CD4-positive, alpha-beta T cell (primary cell): ENCODE measurements at regions of chr6 and their contacts with region 1.

Region 1: GRCh38 chr6:155314092-155314772 is at the start of gene TFB1M:
- DNase-seq: peak; percentile 88 to 99 (median 96)
- ATAC-seq: peak; percentile 94
- H3K4me3 ChIP-seq: peak within 1 kb of the TSS; percentile 74
- H3K4me3 Mint-ChIP-seq: peak within 1 kb of the TSS; percentile 97
- H3K27ac ChIP-seq: peak within 1 kb of the TSS; percentile 84 to 92
- H3K27ac Mint-ChIP-seq: peak within 1 kb of the TSS; percentile 91
- H3K4me1 ChIP-seq: no peaks in the 10 kb centered on the region
- H3K4me1 Mint-ChIP-seq: peaks cover 48% of the 10 kb centered on the region
- H3K27me3 ChIP-seq: no peaks in the 10 kb centered on the region
- H3K27me3 Mint-ChIP-seq: no peaks in the 10 kb centered on the region
- CTCF ChIP-seq: no peak
- total RNA-seq, gene TFB1M: 7.2 to 9.2 TPM

Region 2: DNA sequence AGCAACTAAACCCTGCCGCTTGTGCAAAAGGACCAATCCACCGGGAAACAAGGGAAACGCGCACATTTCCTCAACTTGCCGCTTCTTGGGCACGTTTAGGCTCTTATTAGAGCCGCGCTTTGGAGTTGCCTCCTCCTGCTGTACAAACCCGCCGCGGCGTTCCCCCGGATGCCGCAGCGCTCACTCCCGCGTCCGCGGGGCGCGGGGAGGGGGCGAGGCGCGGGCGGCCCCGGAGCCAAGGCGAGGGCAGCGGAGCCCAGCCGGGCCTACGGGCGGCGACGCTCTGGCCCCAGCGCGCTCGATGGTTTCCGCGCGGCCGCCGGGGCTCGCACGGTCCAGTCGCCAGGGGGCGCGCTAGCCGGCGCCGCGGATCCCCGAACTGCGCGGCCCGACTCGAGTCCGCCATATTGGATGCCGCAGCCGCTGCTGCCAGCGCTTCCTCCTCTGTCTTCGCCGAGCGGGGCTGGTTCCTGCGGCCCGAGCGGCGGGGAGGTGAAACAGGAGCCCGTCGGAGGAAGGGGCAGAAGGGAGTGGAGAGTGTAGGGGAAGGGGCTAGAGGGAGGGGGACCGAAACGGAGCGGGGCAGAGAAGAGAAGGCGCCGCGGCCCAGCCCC is 581.1 kb before region 1 on chr6 and contains the start of gene SCAF8:
- CTCF ChIA-PET with region 1: no interaction called
- POLR2A ChIA-PET with region 1: no interaction called
- intact Hi-C with region 1: loop called (anchors 2 to 5 kb)
- DNase-seq: peak; percentile 70 to 95 (median 83)
- ATAC-seq: peak; percentile 65
- H3K4me3 ChIP-seq: peak within 1 kb of the TSS; percentile 87
- H3K4me3 Mint-ChIP-seq: peak within 1 kb of the TSS; percentile 95
- H3K27ac ChIP-seq: peak within 1 kb of the TSS; percentile 95 to 98
- H3K27ac Mint-ChIP-seq: peak within 1 kb of the TSS; percentile 86
- H3K4me1 ChIP-seq: peaks cover 41% of the 10 kb centered on the region
- H3K4me1 Mint-ChIP-seq: peaks cover 36% of the 10 kb centered on the region
- H3K27me3 ChIP-seq: no peaks in the 10 kb centered on the region
- H3K27me3 Mint-ChIP-seq: no peaks in the 10 kb centered on the region
- CTCF ChIP-seq: peak; percentile 69
- total RNA-seq, gene SCAF8: 82.6 to 83.8 TPM

Region 3: GRCh38 chr6:154738551-154738961 is 575.7 kb before region 1 on chr6:
- CTCF ChIA-PET with region 1: no interaction called
- POLR2A ChIA-PET with region 1: no interaction called
- intact Hi-C with region 1: loop called (anchors 2 to 5 kb)
- DNase-seq: no peak
- ATAC-seq: no peak
- H3K4me3 ChIP-seq: no peak overlapping the region
- H3K4me3 Mint-ChIP-seq: peak overlapping the region; percentile 74
- H3K27ac ChIP-seq: no peak overlapping the region
- H3K27ac Mint-ChIP-seq: no peak overlapping the region
- H3K4me1 ChIP-seq: peaks cover 51% of the 10 kb centered on the region
- H3K4me1 Mint-ChIP-seq: peaks cover 74% of the 10 kb centered on the region
- H3K27me3 ChIP-seq: no peaks in the 10 kb centered on the region
- H3K27me3 Mint-ChIP-seq: no peaks in the 10 kb centered on the region
- CTCF ChIP-seq: no peak

Region 4: DNA sequence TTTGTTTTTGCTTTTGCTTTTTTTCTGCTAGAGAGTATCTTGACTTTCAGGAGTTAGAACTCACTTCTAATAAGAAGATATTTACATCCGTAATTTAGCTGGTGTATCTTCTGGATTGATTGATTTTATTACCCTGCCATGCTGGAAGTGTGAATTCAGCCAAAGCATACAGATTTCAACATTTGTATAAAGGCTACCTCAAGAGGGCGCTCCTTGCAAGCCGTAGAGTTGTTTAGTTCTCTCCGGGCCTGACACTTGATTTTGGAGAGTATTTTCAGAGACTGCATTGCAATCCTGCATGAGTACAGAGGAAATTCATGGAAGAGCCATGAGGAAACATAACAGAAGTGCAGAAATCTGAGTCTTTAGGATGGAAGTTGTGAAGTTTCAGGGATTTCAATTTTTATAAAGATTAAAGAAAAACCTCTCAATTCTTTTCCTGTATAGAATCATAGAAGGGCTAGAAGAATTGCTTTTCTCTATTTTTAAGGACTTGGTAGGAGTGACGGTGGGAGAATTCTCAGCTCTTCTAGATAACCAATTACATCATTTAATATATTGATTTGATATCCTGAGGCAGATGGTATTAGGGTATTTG is 385.8 kb before region 1 on chr6:
- CTCF ChIA-PET with region 1: no interaction called
- POLR2A ChIA-PET with region 1: no interaction called
- intact Hi-C with region 1: loop called in 1 of 2 experiments (anchors 2 kb)
- DNase-seq: peak; percentile 16 to 74 (median 44)
- ATAC-seq: peak; percentile 49
- H3K4me3 ChIP-seq: no peak overlapping the region
- H3K4me3 Mint-ChIP-seq: no peak overlapping the region
- H3K27ac ChIP-seq: no peak overlapping the region
- H3K27ac Mint-ChIP-seq: no peak overlapping the region
- H3K4me1 ChIP-seq: no peaks in the 10 kb centered on the region
- H3K4me1 Mint-ChIP-seq: peaks cover 8% of the 10 kb centered on the region
- H3K27me3 ChIP-seq: no peaks in the 10 kb centered on the region
- H3K27me3 Mint-ChIP-seq: no peaks in the 10 kb centered on the region
- CTCF ChIP-seq: peak; percentile 76

Region 5: GRCh38 chr6:155174576-155175211 is 139.5 kb before region 1 on chr6:
- CTCF ChIA-PET with region 1: interaction called, 4 read pairs
- POLR2A ChIA-PET with region 1: interaction called, 4 read pairs
- intact Hi-C with region 1: loop called (anchors 5 to 10 kb)
- DNase-seq: peak; percentile 25 to 85 (median 42)
- ATAC-seq: peak; percentile 58
- H3K4me3 ChIP-seq: no peak overlapping the region
- H3K4me3 Mint-ChIP-seq: no peak overlapping the region
- H3K27ac ChIP-seq: no peak overlapping the region
- H3K27ac Mint-ChIP-seq: no peak overlapping the region
- H3K4me1 ChIP-seq: peaks cover 20% of the 10 kb centered on the region
- H3K4me1 Mint-ChIP-seq: peaks cover 35% of the 10 kb centered on the region
- H3K27me3 ChIP-seq: no peaks in the 10 kb centered on the region
- H3K27me3 Mint-ChIP-seq: no peaks in the 10 kb centered on the region
- CTCF ChIP-seq: peak; percentile 49

Region 6: GRCh38 chr6:155303361-155303870 is 10.8 kb before region 1 on chr6:
- CTCF ChIA-PET with region 1: interaction called, 5 read pairs
- POLR2A ChIA-PET with region 1: interaction called, 18 read pairs
- intact Hi-C with region 1: no loop called
- DNase-seq: no peak
- ATAC-seq: no peak
- H3K4me3 ChIP-seq: no peak overlapping the region
- H3K4me3 Mint-ChIP-seq: no peak overlapping the region
- H3K27ac ChIP-seq: no peak overlapping the region
- H3K27ac Mint-ChIP-seq: no peak overlapping the region
- H3K4me1 ChIP-seq: peaks cover 2% of the 10 kb centered on the region
- H3K4me1 Mint-ChIP-seq: peaks cover 25% of the 10 kb centered on the region
- H3K27me3 ChIP-seq: no peaks in the 10 kb centered on the region
- H3K27me3 Mint-ChIP-seq: no peaks in the 10 kb centered on the region
- CTCF ChIP-seq: no peak

Region 7: GRCh38 chr6:156686995-156687788 is 1373.0 kb after region 1 on chr6:
- CTCF ChIA-PET with region 1: no interaction called
- POLR2A ChIA-PET with region 1: no interaction called
- intact Hi-C with region 1: loop called in 1 of 2 experiments (anchors 10 kb)
- DNase-seq: peak; percentile 53 to 94 (median 76)
- ATAC-seq: peak; percentile 76
- H3K4me3 ChIP-seq: peak overlapping the region; percentile 82
- H3K4me3 Mint-ChIP-seq: peak overlapping the region; percentile 92
- H3K27ac ChIP-seq: peak overlapping the region; percentile 91 to 97
- H3K27ac Mint-ChIP-seq: peak overlapping the region; percentile 92
- H3K4me1 ChIP-seq: peaks cover 14% of the 10 kb centered on the region
- H3K4me1 Mint-ChIP-seq: peaks cover 24% of the 10 kb centered on the region
- H3K27me3 ChIP-seq: no peaks in the 10 kb centered on the region
- H3K27me3 Mint-ChIP-seq: no peaks in the 10 kb centered on the region
- CTCF ChIP-seq: no peak